CD8-positive, alpha-beta T cell (primary cell): ENCODE measurements at regions of chr1 and their contacts with region 1.

Region 1: DNA sequence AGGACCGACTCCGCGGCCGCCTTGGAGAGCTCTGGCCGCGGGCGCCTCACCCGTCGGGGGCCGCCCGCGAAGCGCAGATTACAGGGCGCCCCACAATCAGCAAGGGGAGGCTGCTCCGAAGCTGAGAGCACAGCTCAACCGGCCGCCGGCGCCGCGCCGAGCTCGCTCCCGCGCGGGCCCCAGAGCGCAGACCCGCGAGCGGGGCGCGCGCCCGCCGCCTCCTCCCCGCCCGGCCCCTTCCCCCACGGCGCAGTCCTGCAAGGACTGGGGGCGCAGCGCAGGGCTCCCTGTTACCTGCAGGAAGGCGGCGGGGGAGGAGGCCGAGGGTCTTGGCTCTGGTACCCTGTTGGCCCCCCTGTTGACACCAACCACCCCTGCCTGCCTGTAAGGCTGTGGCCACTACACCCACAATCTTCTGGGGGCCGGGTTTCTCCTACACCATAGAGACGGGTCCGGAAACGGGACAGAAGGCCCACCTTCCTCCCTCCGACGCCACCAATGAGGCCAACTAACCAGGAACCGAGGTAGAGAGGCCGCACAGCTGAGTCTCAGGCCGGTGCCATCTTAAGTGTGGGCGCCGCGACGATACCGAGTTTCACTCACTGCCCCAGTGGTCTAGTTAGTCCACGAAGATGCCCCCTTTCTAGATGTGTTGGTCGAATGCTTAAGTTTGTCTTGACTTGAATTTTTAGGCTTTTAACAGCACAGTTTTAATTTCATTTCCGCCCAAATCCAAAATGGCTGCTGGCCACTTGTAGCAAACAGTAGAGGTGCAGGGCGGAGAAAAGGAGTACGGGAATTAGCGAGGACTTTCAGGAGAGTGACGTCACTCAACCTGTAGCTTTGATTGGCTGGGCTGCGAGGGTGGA is at the start of gene SCYL3:
- DNase-seq: peak; percentile 75 to 97 (median 89)
- ATAC-seq: peak; percentile 83
- H3K4me3 ChIP-seq: peak within 1 kb of the TSS; percentile 80 to 82
- H3K4me3 Mint-ChIP-seq: peak within 1 kb of the TSS; percentile 89
- H3K27ac ChIP-seq: peak within 1 kb of the TSS; percentile 98 to 99
- H3K27ac Mint-ChIP-seq: peak within 1 kb of the TSS; percentile 99
- H3K4me1 ChIP-seq: peaks cover 35% of the 10 kb centered on the region
- H3K4me1 Mint-ChIP-seq: peaks cover 46% of the 10 kb centered on the region
- H3K27me3 ChIP-seq: no peaks in the 10 kb centered on the region
- H3K27me3 Mint-ChIP-seq: no peaks in the 10 kb centered on the region
- CTCF ChIP-seq: no peak
- total RNA-seq, gene SCYL3: 3.3 to 3.7 TPM

Region 2: DNA sequence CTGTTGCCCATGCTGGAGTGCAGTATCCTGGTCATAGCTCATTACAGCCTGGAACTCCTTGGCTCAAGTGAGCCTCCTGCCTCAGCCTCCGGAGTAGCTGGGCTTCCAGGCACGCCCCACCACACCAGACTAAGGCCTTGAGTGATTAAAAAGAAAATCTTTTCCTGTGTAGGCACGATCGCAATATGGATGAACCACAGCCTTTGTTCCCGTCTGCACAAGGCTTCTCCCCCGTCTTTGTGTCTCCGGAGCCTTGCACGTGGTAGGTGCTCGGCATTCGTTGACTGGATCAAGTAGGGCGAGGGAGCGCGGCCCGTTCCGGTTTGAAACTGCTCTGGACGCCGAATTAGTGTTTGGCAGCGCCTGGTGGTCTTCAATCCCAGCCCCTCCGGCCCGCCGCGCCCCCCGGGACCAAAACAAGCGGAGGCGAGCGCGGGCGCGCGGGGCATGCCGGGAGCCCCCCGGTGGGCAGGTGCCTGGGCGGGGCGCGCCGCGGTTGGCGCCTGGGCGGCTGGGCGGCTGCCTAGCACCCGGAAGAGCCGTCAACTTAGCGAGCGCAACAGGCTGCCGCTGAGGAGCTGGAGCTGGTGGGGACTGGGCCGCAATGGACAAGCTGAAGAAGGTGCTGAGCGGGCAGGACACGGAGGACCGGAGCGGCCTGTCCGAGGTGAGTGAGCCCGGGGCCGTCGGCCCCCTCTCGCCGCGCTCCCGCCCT is 1668.1 kb before region 1 on chr1 and contains the start of gene SFT2D2:
- CTCF ChIA-PET with region 1: no interaction called
- POLR2A ChIA-PET with region 1: no interaction called
- intact Hi-C with region 1: loop called in 1 of 2 experiments (anchors 5 kb)
- DNase-seq: peak; percentile 46 to 89 (median 77)
- ATAC-seq: peak; percentile 98
- H3K4me3 ChIP-seq: peak within 1 kb of the TSS; percentile 90 to 93
- H3K4me3 Mint-ChIP-seq: peak within 1 kb of the TSS; percentile 94
- H3K27ac ChIP-seq: peak within 1 kb of the TSS; percentile 71 to 75
- H3K27ac Mint-ChIP-seq: peak within 1 kb of the TSS; percentile 93
- H3K4me1 ChIP-seq: peaks cover 37% of the 10 kb centered on the region
- H3K4me1 Mint-ChIP-seq: peaks cover 49% of the 10 kb centered on the region
- H3K27me3 ChIP-seq: no peaks in the 10 kb centered on the region
- H3K27me3 Mint-ChIP-seq: peaks cover 3% of the 10 kb centered on the region
- CTCF ChIP-seq: no peak
- total RNA-seq, gene SFT2D2: 61.2 to 62.3 TPM

Region 3: DNA sequence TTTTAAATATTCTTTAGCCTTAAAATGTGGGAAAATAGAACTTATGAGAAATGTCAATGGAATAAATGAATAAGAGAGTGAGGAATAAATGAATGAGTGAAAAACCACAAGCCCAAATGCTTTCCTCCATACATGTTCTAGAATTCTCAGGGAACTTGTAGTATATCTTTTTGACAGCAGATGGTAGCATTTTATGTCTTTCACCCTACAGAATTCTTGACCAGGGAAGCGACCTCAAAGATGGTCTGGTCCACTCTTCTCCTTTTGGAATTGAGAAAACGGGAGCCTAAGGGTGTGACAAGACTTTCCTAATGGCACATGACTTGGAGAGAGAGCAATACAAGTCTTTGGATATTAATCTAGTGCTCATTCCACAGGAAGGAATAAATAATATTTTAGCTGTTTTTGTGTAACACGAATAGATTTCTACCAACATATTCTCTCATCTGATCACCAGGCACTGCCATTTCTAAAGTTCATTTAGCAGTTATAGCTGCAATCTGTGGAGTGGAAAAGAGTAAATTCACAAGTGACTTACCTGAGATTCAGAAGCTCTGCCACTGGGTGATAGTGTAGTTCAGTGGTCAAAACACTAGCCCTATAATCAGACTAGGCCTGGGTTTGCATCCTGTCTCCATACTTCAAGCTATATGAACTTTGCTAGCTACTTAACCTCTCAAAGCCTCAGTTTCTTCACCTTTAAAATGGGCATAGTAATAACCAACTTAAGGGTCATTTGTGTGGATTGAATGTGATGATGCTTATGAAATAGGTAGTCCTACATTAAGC is 292.4 kb before region 1 on chr1:
- CTCF ChIA-PET with region 1: no interaction called
- POLR2A ChIA-PET with region 1: no interaction called
- intact Hi-C with region 1: loop called in 1 of 2 experiments (anchors 5 kb)
- DNase-seq: peak in 2 of 9 experiments; percentile 45 to 61
- ATAC-seq: no peak
- H3K4me3 ChIP-seq: no peak overlapping the region
- H3K4me3 Mint-ChIP-seq: no peak overlapping the region
- H3K27ac ChIP-seq: peak overlapping the region in 1 of 2 experiments; percentile 3
- H3K27ac Mint-ChIP-seq: peak overlapping the region; percentile 53
- H3K4me1 ChIP-seq: peaks cover 54% of the 10 kb centered on the region
- H3K4me1 Mint-ChIP-seq: peaks cover 54% of the 10 kb centered on the region
- H3K27me3 ChIP-seq: no peaks in the 10 kb centered on the region
- H3K27me3 Mint-ChIP-seq: no peaks in the 10 kb centered on the region
- CTCF ChIP-seq: peak; percentile 67

Region 4: GRCh38 chr1:169648709-169649108 is 245.0 kb before region 1 on chr1:
- CTCF ChIA-PET with region 1: no interaction called
- POLR2A ChIA-PET with region 1: no interaction called
- intact Hi-C with region 1: no loop called
- DNase-seq: no peak
- ATAC-seq: no peak
- H3K4me3 ChIP-seq: no peak overlapping the region
- H3K4me3 Mint-ChIP-seq: no peak overlapping the region
- H3K27ac ChIP-seq: no peak overlapping the region
- H3K27ac Mint-ChIP-seq: peak overlapping the region; percentile 76
- H3K4me1 ChIP-seq: peaks cover 27% of the 10 kb centered on the region
- H3K4me1 Mint-ChIP-seq: peaks cover 39% of the 10 kb centered on the region
- H3K27me3 ChIP-seq: no peaks in the 10 kb centered on the region
- H3K27me3 Mint-ChIP-seq: no peaks in the 10 kb centered on the region
- CTCF ChIP-seq: no peak

Region 5: GRCh38 chr1:169727307-169727706 is 166.4 kb before region 1 on chr1:
- CTCF ChIA-PET with region 1: no interaction called
- POLR2A ChIA-PET with region 1: no interaction called
- intact Hi-C with region 1: no loop called
- DNase-seq: no peak
- ATAC-seq: no peak
- H3K4me3 ChIP-seq: no peak overlapping the region
- H3K4me3 Mint-ChIP-seq: no peak overlapping the region
- H3K27ac ChIP-seq: no peak overlapping the region
- H3K27ac Mint-ChIP-seq: no peak overlapping the region
- H3K4me1 ChIP-seq: no peaks in the 10 kb centered on the region
- H3K4me1 Mint-ChIP-seq: no peaks in the 10 kb centered on the region
- H3K27me3 ChIP-seq: no peaks in the 10 kb centered on the region
- H3K27me3 Mint-ChIP-seq: peaks cover 4% of the 10 kb centered on the region
- CTCF ChIP-seq: no peak

Region 6: DNA sequence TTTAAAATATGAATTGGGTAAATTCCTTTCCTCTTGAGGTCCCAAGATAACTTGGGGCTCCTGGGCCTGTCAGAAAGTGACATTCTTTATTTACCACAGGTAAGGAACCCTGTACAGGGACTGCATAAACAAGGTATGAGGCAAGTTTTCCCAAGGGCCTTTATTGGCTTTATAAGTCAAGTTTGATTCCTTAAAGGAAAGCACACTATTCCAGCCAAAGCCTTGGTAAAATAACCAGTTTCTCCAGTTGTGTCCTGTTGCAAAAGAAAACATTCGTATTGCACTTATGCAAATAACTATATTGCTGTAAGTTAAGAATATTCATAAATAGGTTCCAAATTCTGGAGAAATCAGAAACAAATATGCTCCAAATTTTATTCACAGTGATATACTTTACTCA is 77.1 kb before region 1 on chr1:
- CTCF ChIA-PET with region 1: no interaction called
- POLR2A ChIA-PET with region 1: no interaction called
- intact Hi-C with region 1: no loop called
- DNase-seq: no peak
- ATAC-seq: no peak
- H3K4me3 ChIP-seq: no peak overlapping the region
- H3K4me3 Mint-ChIP-seq: no peak overlapping the region
- H3K27ac ChIP-seq: no peak overlapping the region
- H3K27ac Mint-ChIP-seq: no peak overlapping the region
- H3K4me1 ChIP-seq: no peaks in the 10 kb centered on the region
- H3K4me1 Mint-ChIP-seq: peaks cover 2% of the 10 kb centered on the region
- H3K27me3 ChIP-seq: no peaks in the 10 kb centered on the region
- H3K27me3 Mint-ChIP-seq: no peaks in the 10 kb centered on the region
- CTCF ChIP-seq: no peak

Region 7: GRCh38 chr1:170074250-170075157 is 180.8 kb after region 1 on chr1 and contains the start of gene KIFAP3:
- CTCF ChIA-PET with region 1: interaction called, 3 read pairs
- POLR2A ChIA-PET with region 1: interaction called, 5 read pairs
- intact Hi-C with region 1: loop called (anchors 1 kb)
- DNase-seq: peak; percentile 89 to 99 (median 95)
- ATAC-seq: peak; percentile 96
- H3K4me3 ChIP-seq: peak within 1 kb of the TSS; percentile 74 to 92
- H3K4me3 Mint-ChIP-seq: peak within 1 kb of the TSS; percentile 89
- H3K27ac ChIP-seq: peak within 1 kb of the TSS; percentile 80 to 88
- H3K27ac Mint-ChIP-seq: peak within 1 kb of the TSS; percentile 94
- H3K4me1 ChIP-seq: peaks cover 28% of the 10 kb centered on the region
- H3K4me1 Mint-ChIP-seq: peaks cover 53% of the 10 kb centered on the region
- H3K27me3 ChIP-seq: no peaks in the 10 kb centered on the region
- H3K27me3 Mint-ChIP-seq: no peaks in the 10 kb centered on the region
- CTCF ChIP-seq: peak; percentile 46
- total RNA-seq, gene KIFAP3: 15.3 to 16.5 TPM

Region 8: DNA sequence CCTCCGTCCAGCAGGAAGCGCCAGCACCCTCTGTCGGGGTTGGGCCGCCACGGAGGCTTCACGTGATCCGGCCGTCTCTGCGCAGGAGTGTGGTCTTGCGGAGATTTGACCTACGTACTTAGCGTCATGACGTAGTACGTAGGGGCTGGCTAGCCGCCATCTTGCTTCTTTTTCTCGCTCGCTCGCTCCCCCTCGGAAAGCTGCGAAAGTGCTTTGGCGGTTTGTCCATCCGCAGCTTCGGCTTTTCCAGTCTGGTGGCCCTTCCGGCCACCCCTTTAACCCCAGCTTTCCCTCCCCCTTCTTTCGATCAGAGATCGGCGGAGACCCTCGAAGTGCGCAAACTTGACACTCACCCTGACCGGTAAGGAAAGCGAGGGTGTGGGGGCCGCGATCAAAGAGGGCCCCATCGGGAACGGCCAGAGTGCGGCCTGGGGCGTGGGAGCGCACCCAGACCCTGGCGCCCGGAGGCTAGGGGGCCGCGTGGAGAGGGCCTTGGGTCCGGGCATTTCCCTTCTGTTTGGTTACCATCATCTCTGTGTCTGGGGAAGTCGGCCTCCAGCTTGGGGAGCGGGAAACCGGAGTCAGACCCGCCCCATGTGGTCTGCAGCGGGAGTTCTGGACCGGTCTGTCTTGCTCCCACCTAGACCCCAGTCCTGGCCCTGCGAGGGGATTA is 1591.8 kb after region 1 on chr1 and contains the start of gene PRRC2C:
- CTCF ChIA-PET with region 1: no interaction called
- POLR2A ChIA-PET with region 1: no interaction called
- intact Hi-C with region 1: loop called (anchors 1 to 2 kb)
- DNase-seq: peak; percentile 87 to 99 (median 94)
- ATAC-seq: peak; percentile 79
- H3K4me3 ChIP-seq: peak within 1 kb of the TSS; percentile 93 to 97
- H3K4me3 Mint-ChIP-seq: peak within 1 kb of the TSS; percentile 90
- H3K27ac ChIP-seq: peak within 1 kb of the TSS; percentile 96 to 100
- H3K27ac Mint-ChIP-seq: peak within 1 kb of the TSS; percentile 95
- H3K4me1 ChIP-seq: peaks cover 44% of the 10 kb centered on the region
- H3K4me1 Mint-ChIP-seq: peaks cover 48% of the 10 kb centered on the region
- H3K27me3 ChIP-seq: no peaks in the 10 kb centered on the region
- H3K27me3 Mint-ChIP-seq: no peaks in the 10 kb centered on the region
- CTCF ChIP-seq: peak; percentile 89
- total RNA-seq, gene PRRC2C: 416 to 423 TPM

Region 9: DNA sequence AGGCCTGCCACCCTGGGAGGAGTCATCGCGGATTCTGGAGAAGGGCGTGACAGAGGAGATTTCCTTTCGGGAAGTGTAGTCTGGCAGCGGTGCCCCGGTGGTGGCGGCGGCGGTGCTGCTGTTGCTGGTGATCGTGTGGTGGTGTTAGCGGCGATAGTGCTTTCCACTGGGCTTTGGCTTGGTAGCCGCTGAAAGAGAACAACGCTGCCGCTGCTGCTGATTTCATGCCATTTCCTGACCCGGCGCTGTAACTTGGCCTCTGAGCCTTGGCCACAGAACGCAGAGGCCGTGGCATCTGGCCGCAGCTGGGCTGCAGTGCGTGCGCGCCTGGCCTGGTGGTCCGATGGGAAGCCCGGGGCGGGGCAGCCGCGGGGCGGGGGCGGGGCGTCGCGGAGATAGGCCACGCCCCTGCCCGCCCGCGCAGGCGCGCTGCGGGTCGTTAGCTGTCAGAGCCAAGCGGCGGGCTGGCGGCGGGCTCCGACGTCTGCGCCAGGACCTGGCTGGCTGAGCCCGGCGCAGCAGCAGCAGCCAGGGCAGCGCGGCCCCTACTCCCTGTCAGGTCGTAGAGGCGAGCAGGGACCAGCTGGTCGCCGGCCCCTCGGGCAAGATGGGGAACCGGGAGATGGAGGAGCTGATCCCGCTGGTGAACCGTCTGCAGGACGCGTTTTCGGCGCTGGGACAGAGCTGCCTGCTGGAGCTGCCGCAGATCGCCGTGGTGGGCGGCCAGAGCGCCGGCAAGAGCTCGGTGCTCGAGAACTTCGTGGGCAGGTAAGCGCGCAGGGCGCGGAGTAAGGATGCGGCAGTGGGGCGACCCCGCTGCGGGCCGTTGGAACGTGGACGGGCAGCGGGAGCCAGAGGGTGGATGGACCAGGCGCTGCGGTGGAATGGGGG is 1947.6 kb after region 1 on chr1 and contains the start of gene DNM3:
- CTCF ChIA-PET with region 1: no interaction called
- POLR2A ChIA-PET with region 1: no interaction called
- intact Hi-C with region 1: loop called in 1 of 2 experiments (anchors 5 kb)
- DNase-seq: peak; percentile 51 to 89 (median 77)
- ATAC-seq: peak; percentile 94
- H3K4me3 ChIP-seq: peak within 1 kb of the TSS; percentile 75 to 80
- H3K4me3 Mint-ChIP-seq: peak within 1 kb of the TSS; percentile 87
- H3K27ac ChIP-seq: no peak within 1 kb of the TSS
- H3K27ac Mint-ChIP-seq: peak within 1 kb of the TSS; percentile 16
- H3K4me1 ChIP-seq: peaks cover 9% of the 10 kb centered on the region
- H3K4me1 Mint-ChIP-seq: peaks cover 14% of the 10 kb centered on the region
- H3K27me3 ChIP-seq: peaks cover 4 to 9% of the 10 kb centered on the region in 2 experiments
- H3K27me3 Mint-ChIP-seq: peaks cover 16% of the 10 kb centered on the region
- CTCF ChIP-seq: no peak
- total RNA-seq, gene DNM3: 0.72 to 1.1 TPM